GM23248 (cell line): ENCODE measurements at regions of chr1 and their contacts with region 1.

Region 1: GRCh38 chr1:28091043-28091781 is 2.8 kb upstream of the EYA3 start:
- DNase-seq: peak; percentile 69
- H3K4me3 ChIP-seq: no peak overlapping the region
- H3K27ac ChIP-seq: no peak overlapping the region
- H3K4me1 ChIP-seq: peaks cover 10% of the 10 kb centered on the region; the same call in 1 of the 2 replicates
- H3K27me3 ChIP-seq: no peaks in the 10 kb centered on the region

Region 2: DNA sequence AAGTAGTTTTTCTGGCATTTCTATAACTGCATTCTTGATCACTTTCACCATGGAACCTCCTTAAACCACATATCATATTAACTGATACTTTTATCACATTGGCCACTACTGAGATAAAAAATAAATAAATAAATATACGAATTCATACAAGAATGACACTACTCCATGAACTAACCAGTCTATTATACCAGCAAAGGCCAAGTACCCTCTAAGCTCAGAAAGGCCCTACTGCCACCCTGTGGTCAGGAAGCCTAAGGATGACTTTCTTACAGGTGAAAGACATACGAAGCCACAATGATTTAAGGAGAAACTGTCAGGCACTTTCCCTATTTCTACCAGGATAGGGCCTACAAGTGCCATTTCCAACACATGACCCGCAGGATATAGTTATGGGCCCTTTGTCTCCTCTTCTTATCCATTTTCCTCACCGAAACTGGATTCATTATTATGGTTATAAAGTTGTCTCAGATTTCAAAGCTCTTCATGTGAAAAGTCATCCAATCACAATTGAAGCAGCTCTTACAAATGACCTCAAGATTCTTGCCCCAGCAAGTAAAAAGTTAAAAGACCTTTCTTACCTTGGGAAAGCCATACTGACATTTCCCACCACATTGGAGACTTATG is 117.7 kb after region 1 on chr1:
- in situ Hi-C with region 1: loop called (anchors 10 kb)
- DNase-seq: peak; percentile 80
- H3K4me3 ChIP-seq: no peak overlapping the region
- H3K27ac ChIP-seq: no peak overlapping the region
- H3K4me1 ChIP-seq: no peaks in the 10 kb centered on the region
- H3K27me3 ChIP-seq: no peaks in the 10 kb centered on the region

Region 3: DNA sequence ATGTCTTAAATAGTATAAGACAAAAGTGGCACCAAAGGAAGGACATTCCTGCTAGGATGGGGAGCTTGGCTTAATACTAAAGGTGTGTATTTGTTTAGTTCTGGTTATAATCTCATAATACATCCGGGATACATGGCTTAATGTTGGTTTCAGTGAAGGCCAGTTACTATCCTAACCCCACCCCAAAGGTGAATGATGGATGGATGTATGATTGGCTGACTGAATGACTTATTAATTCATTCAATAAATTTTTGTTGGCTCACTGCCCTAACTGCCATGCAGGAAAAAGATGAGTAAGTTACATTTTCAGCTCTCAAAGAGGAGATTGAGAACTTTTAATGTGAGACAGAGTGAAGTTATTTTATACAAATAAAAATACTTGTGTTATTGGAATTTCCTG is 330.5 kb after region 1 on chr1:
- in situ Hi-C with region 1: no loop called
- DNase-seq: no peak
- H3K4me3 ChIP-seq: no peak overlapping the region
- H3K27ac ChIP-seq: no peak overlapping the region
- H3K4me1 ChIP-seq: peaks cover 29% of the 10 kb centered on the region
- H3K27me3 ChIP-seq: no peaks in the 10 kb centered on the region